Dendritic cell treated with granulocyte-macrophage colony-stimulating factor and Interleukin-4, amounts not matched to agents 40 ng/mL and 50 ng/mL, for 4 days (primary cell): ENCODE measurements at regions of chr2 and their contacts with region 1.

Region 1: DNA sequence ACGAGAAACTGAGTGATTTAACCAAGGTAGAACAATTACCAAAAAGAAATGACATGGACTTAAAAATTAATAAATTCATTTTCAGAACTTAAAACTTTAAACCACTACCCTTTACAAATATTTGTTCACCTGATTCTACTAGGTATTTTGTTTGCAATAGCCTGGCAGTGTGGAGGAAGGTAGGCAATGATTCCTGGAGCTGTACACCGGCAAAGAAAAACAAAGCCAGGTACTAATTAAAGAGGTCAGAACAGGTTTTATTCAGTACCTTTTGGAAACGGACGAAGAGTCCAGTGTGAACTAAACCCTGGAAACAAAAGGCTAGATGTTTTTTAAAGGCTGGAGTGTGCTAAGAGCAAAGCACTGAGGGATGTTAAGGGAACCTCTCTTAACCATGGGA is 561.3 kb upstream of the FSHR start:
- H3K4me3 Mint-ChIP-seq: no peak overlapping the region
- H3K27ac Mint-ChIP-seq: no peak overlapping the region
- H3K4me1 Mint-ChIP-seq: no peaks in the 10 kb centered on the region
- H3K27me3 Mint-ChIP-seq: no peaks in the 10 kb centered on the region

Region 2: DNA sequence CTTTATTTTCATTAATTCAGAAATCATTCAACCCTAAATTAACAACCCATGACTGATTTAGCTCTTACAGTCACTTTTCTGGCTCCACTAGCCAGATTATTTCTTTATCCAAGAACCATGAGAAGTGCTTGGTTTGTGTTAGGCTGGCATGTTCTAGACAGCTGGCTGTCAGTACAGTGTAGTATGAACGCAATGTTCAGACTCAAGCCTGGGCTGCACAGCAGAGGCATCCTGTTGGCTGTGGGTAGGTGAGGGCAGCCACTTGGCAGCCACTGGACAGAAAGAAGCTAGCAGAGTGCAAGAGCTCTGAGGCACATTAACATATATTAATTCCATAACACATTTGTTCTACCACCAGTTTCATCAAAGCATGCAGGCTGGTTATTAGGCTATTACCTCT is 38.4 kb before region 1 on chr2:
- intact Hi-C with region 1: no loop called
- H3K4me3 Mint-ChIP-seq: no peak overlapping the region
- H3K27ac Mint-ChIP-seq: no peak overlapping the region
- H3K4me1 Mint-ChIP-seq: no peaks in the 10 kb centered on the region
- H3K27me3 Mint-ChIP-seq: no peaks in the 10 kb centered on the region

Region 3: DNA sequence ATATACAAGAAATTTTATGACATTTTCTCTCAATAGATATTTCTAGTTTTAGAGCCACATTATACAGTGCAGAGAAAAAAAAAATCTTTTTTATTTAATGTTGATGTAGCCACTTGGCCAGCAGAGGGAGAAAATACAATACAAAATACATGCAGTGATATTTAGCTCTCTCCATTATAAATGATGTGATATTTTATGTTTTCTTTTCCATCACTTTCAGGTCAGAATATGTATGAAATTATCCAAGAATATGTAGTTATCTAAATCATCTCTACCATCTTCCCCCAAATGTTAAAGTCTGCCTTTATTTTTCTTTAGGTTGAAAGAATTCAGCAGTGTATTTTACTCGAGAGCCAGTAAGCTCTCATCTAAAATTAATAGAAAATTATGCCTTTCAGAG is 27.7 kb before region 1 on chr2:
- intact Hi-C with region 1: no loop called
- H3K4me3 Mint-ChIP-seq: no peak overlapping the region
- H3K27ac Mint-ChIP-seq: no peak overlapping the region
- H3K4me1 Mint-ChIP-seq: no peaks in the 10 kb centered on the region
- H3K27me3 Mint-ChIP-seq: no peaks in the 10 kb centered on the region

Region 4: GRCh38 chr2:49924044-49924817 is 208.6 kb after region 1 on chr2:
- intact Hi-C with region 1: loop called (anchors 5 kb)
- H3K4me3 Mint-ChIP-seq: no peak overlapping the region
- H3K27ac Mint-ChIP-seq: no peak overlapping the region
- H3K4me1 Mint-ChIP-seq: no peaks in the 10 kb centered on the region
- H3K27me3 Mint-ChIP-seq: no peaks in the 10 kb centered on the region